CD8-positive, alpha-beta T cell (primary cell): ENCODE measurements at regions of chr19 and their contacts with region 1.

Region 1: GRCh38 chr19:6718741-6719539 is 1.5 kb downstream of the C3 start:
- DNase-seq: peak in 3 of 9 experiments; percentile 46 to 62 (median 62)
- ATAC-seq: peak; percentile 83
- H3K4me3 ChIP-seq: no peak overlapping the region
- H3K4me3 Mint-ChIP-seq: no peak overlapping the region
- H3K27ac ChIP-seq: no peak overlapping the region
- H3K27ac Mint-ChIP-seq: no peak overlapping the region
- H3K4me1 ChIP-seq: no peaks in the 10 kb centered on the region
- H3K4me1 Mint-ChIP-seq: peaks cover 12% of the 10 kb centered on the region
- H3K27me3 ChIP-seq: no peaks in the 10 kb centered on the region
- H3K27me3 Mint-ChIP-seq: no peaks in the 10 kb centered on the region
- CTCF ChIP-seq: no peak

Region 2: GRCh38 chr19:6674868-6675305 is 44.1 kb before region 1 on chr19:
- CTCF ChIA-PET with region 1: no interaction called
- POLR2A ChIA-PET with region 1: no interaction called
- intact Hi-C with region 1: loop called in 1 of 2 experiments (anchors 5 kb)
- DNase-seq: peak; percentile 56 to 93 (median 86)
- ATAC-seq: peak; percentile 67
- H3K4me3 ChIP-seq: peak overlapping the region in 1 of 2 experiments; percentile 31
- H3K4me3 Mint-ChIP-seq: peak overlapping the region; percentile 50
- H3K27ac ChIP-seq: peak overlapping the region in 1 of 2 experiments; percentile 6
- H3K27ac Mint-ChIP-seq: peak overlapping the region; percentile 84
- H3K4me1 ChIP-seq: peaks cover 33% of the 10 kb centered on the region
- H3K4me1 Mint-ChIP-seq: peaks cover 45% of the 10 kb centered on the region
- H3K27me3 ChIP-seq: no peaks in the 10 kb centered on the region
- H3K27me3 Mint-ChIP-seq: no peaks in the 10 kb centered on the region
- CTCF ChIP-seq: no peak

Region 3: DNA sequence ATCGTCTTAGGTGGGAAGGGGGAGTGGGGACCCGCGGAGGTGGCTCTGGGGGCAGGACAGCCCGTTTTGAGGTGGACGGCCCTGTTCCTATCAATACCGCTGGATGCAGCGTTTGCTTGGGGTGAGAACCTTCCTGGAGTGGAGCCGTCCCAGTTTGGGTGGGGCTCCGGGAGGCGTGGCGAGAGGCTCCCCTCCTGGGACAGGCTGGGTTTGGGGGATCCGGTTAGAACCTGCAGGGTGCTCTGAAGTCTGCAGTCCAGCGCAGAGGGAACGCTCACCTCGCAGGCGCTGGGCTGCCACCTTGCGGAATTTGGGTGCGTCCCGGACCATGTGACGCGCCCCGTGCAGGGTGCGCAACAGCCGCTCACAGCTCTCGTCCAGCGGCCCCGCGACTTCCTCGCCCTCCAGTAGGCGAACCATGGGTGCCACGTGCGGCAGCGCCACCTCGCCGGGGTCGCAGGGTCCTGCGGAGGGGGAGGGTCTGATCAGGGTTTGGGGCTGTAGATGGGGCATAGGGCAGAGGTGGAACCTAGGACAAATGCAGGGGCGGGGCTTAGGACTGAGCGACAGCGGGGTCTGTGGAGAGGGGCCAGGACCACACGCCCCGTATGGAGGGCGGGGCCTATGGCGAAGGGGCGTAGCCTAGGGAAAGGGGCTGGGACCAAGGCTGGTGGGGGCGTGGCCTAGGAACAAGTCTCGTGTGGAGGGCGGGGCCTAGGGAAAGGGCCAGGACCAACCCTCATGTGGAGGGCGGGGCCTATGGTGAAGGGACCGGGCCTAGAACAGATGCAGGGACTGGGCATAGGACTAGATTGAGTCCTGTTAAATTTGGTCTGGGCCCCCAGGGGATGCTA is 34.5 kb after region 1 on chr19:
- CTCF ChIA-PET with region 1: no interaction called
- POLR2A ChIA-PET with region 1: no interaction called
- intact Hi-C with region 1: loop called in 1 of 2 experiments (anchors 2 kb)
- DNase-seq: peak; percentile 51 to 89 (median 73)
- ATAC-seq: peak; percentile 90
- H3K4me3 ChIP-seq: peak overlapping the region; percentile 42 to 59
- H3K4me3 Mint-ChIP-seq: peak overlapping the region; percentile 76
- H3K27ac ChIP-seq: peak overlapping the region; percentile 35 to 40
- H3K27ac Mint-ChIP-seq: peak overlapping the region; percentile 81
- H3K4me1 ChIP-seq: peaks cover 4% of the 10 kb centered on the region
- H3K4me1 Mint-ChIP-seq: peaks cover 12% of the 10 kb centered on the region
- H3K27me3 ChIP-seq: no peaks in the 10 kb centered on the region
- H3K27me3 Mint-ChIP-seq: no peaks in the 10 kb centered on the region
- CTCF ChIP-seq: peak; percentile 47

Region 4: DNA sequence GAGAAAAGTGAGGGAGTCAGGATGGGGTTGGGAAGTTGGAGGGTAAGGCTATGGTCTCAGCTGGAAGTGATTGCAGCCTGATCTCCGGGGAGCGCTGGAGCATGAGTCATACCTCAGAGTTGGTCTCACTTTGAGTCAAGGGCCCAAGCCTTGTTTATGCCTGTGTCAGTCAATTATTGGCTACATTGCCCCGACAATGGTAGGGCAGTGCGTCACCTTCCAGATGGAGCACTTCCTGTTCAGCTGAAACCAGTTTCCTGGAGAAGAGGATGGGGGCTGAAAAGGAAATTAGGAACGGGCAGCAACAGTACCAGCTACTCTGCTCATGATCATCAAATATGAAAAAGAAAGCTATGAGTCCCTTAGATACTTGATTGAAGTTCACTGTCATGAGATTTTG is 228.8 kb after region 1 on chr19:
- CTCF ChIA-PET with region 1: no interaction called
- POLR2A ChIA-PET with region 1: no interaction called
- intact Hi-C with region 1: no loop called
- DNase-seq: no peak
- ATAC-seq: no peak
- H3K4me3 ChIP-seq: no peak overlapping the region
- H3K4me3 Mint-ChIP-seq: no peak overlapping the region
- H3K27ac ChIP-seq: no peak overlapping the region
- H3K27ac Mint-ChIP-seq: no peak overlapping the region
- H3K4me1 ChIP-seq: no peaks in the 10 kb centered on the region
- H3K4me1 Mint-ChIP-seq: peaks cover 6% of the 10 kb centered on the region
- H3K27me3 ChIP-seq: no peaks in the 10 kb centered on the region
- H3K27me3 Mint-ChIP-seq: peaks cover 4% of the 10 kb centered on the region
- CTCF ChIP-seq: no peak